GM13976 (cell line): ENCODE measurements at regions of chr1 and their contacts with region 1.

Region 1: GRCh38 chr1:173824331-173825081 is at the starts of genes CENPL and DARS2:
- DNase-seq: peak; percentile 89
- CTCF ChIP-seq: no peak

Region 2: GRCh38 chr1:173429471-173430402 is 394.8 kb before region 1 on chr1:
- in situ Hi-C with region 1: loop called (anchors 10 kb)
- DNase-seq: peak; percentile 42
- CTCF ChIP-seq: peak; percentile 90